B cell (primary cell): ENCODE measurements at regions of chr22 and their contacts with region 1.

Region 1: GRCh38 chr22:20298803-20299735 is 20.8 kb downstream of the DGCR6L start:
- DNase-seq: peak; percentile 89
- ATAC-seq: peak; percentile 90
- H3K4me3 ChIP-seq: peak overlapping the region in 4 of 5 experiments; percentile 28 to 75 (median 58)
- H3K4me3 Mint-ChIP-seq: peak overlapping the region; percentile 90
- H3K27ac ChIP-seq: no peak overlapping the region
- H3K27ac Mint-ChIP-seq: peak overlapping the region; percentile 70
- H3K4me1 ChIP-seq: peaks cover 4 to 10% of the 10 kb centered on the region in 2 donors
- H3K4me1 Mint-ChIP-seq: peaks cover 8% of the 10 kb centered on the region
- H3K27me3 ChIP-seq: peaks cover 0 to 7% (median 0%) of the 10 kb centered on the region in 4 experiments
- H3K27me3 Mint-ChIP-seq: peaks cover 8% of the 10 kb centered on the region
- CTCF ChIP-seq: no peak

Region 2: DNA sequence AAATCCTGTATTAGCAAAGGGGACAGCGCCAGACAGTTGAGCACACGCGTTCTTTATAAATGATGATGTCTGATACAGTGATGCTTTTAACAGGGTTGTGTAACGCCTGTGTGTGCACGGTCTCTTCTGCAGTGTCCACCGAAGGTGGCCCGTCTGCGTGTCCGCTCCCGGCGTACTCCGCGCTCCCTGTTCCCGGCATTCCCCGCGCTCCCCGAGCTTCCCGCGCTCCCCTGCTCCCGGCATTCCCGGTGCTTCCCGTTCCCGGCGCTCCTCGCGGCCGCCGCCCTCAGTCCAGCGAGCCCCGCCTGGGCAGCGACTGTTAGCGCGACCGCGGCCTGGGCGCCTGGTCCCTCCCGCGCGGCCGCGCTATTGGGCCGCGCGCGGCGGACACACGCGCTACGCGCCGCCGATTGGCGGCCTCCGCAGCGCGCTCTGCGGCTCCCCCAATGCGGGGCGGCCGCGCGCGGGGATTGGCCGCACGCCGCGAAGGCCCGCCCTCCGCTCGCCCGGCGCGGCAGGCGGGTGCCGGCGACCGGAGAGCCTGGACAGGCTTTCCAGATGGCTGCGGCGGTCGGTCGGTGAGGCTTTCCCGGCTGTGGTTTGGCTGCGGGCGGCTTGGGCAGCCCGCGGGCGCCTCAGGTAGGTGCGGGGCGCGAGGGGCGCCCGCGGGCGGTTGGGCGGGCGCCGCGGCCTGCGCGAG is 219.2 kb before region 1 on chr22 and contains the start of gene DGCR8:
- CTCF ChIA-PET with region 1: no interaction called
- POLR2A ChIA-PET with region 1: no interaction called
- intact Hi-C with region 1: loop called (anchors 2 kb)
- DNase-seq: peak; percentile 89
- ATAC-seq: peak; percentile 95
- H3K4me3 ChIP-seq: peak within 1 kb of the TSS; percentile 71 to 95 (median 86)
- H3K4me3 Mint-ChIP-seq: peak within 1 kb of the TSS; percentile 95
- H3K27ac ChIP-seq: peak within 1 kb of the TSS; percentile 29 to 70
- H3K27ac Mint-ChIP-seq: peak within 1 kb of the TSS; percentile 89
- H3K4me1 ChIP-seq: peaks cover 9 to 21% of the 10 kb centered on the region in 2 donors
- H3K4me1 Mint-ChIP-seq: peaks cover 37% of the 10 kb centered on the region
- H3K27me3 ChIP-seq: no peaks in the 10 kb centered on the region
- H3K27me3 Mint-ChIP-seq: no peaks in the 10 kb centered on the region
- CTCF ChIP-seq: no peak
- total RNA-seq, gene DGCR8: 43.2 and 46.6 TPM in 2 replicates

Region 3: GRCh38 chr22:20141186-20142077 is 157.6 kb before region 1 on chr22:
- CTCF ChIA-PET with region 1: no interaction called
- POLR2A ChIA-PET with region 1: no interaction called
- intact Hi-C with region 1: no loop called
- DNase-seq: no peak
- ATAC-seq: no peak
- H3K4me3 ChIP-seq: no peak overlapping the region
- H3K4me3 Mint-ChIP-seq: no peak overlapping the region
- H3K27ac ChIP-seq: no peak overlapping the region
- H3K27ac Mint-ChIP-seq: no peak overlapping the region
- H3K4me1 ChIP-seq: peaks cover 0 to 9% of the 10 kb centered on the region in 2 donors
- H3K4me1 Mint-ChIP-seq: peaks cover 15% of the 10 kb centered on the region
- H3K27me3 ChIP-seq: no peaks in the 10 kb centered on the region
- H3K27me3 Mint-ChIP-seq: no peaks in the 10 kb centered on the region
- CTCF ChIP-seq: no peak

Region 4: DNA sequence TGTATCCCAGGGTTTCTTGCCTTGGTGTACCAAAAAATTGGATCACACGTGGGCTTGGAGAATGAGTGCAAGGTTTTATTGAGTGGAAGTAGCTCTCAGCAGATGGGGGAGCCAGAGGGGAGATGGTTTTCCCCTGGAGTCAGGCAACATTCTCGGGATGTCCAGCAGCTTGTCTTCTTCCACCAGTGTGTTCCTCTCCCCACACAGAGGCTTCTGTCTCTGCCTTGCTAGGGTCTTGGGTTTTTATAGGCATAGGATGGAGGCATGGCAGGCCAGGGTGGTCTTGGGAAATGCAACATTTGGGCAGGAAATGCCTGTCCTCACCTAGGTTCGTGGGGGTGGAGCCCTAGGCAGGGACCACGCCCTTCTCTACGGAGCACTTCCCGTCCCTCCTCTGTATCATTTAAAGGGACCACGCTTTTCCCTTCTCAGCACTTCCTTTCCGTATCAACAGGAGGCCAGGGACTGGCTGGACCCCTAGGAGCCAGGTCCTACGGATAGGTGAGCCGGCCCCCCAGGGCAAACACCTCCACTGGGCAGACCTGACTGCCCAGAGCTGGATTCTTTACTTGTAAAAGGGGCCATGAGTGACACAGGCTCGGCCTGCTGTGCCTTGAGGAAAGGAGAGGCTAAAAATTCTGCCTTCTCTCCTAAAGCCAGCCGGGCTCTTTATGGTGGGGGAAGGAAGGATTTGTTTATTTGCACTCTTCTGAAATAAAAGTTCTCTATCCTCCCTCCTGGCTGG is 92.9 kb before region 1 on chr22:
- CTCF ChIA-PET with region 1: no interaction called
- POLR2A ChIA-PET with region 1: no interaction called
- intact Hi-C with region 1: loop called (anchors 1 kb)
- DNase-seq: peak; percentile 70
- ATAC-seq: peak; percentile 82
- H3K4me3 ChIP-seq: peak overlapping the region; percentile 49 to 87 (median 72)
- H3K4me3 Mint-ChIP-seq: peak overlapping the region; percentile 91
- H3K27ac ChIP-seq: peak overlapping the region; percentile 72 to 86
- H3K27ac Mint-ChIP-seq: peak overlapping the region; percentile 92
- H3K4me1 ChIP-seq: peaks cover 18 to 24% of the 10 kb centered on the region in 2 donors
- H3K4me1 Mint-ChIP-seq: peaks cover 20% of the 10 kb centered on the region
- H3K27me3 ChIP-seq: no peaks in the 10 kb centered on the region
- H3K27me3 Mint-ChIP-seq: peaks cover 3% of the 10 kb centered on the region
- CTCF ChIP-seq: no peak

Region 5: GRCh38 chr22:20319745-20320658 is 20.9 kb after region 1 on chr22 and contains the start of gene DGCR6L:
- CTCF ChIA-PET with region 1: no interaction called
- POLR2A ChIA-PET with region 1: interaction called, 4 read pairs
- intact Hi-C with region 1: loop called (anchors 1 kb)
- DNase-seq: peak; percentile 97
- ATAC-seq: peak; percentile 91
- H3K4me3 ChIP-seq: peak within 1 kb of the TSS; percentile 42 to 90 (median 90)
- H3K4me3 Mint-ChIP-seq: peak within 1 kb of the TSS; percentile 93
- H3K27ac ChIP-seq: peak within 1 kb of the TSS in 1 of 2 donors; percentile 74
- H3K27ac Mint-ChIP-seq: peak within 1 kb of the TSS; percentile 87
- H3K4me1 ChIP-seq: peaks cover 6 to 20% of the 10 kb centered on the region in 2 donors
- H3K4me1 Mint-ChIP-seq: peaks cover 27% of the 10 kb centered on the region
- H3K27me3 ChIP-seq: no peaks in the 10 kb centered on the region
- H3K27me3 Mint-ChIP-seq: no peaks in the 10 kb centered on the region
- CTCF ChIP-seq: no peak
- total RNA-seq, gene DGCR6L: 20.5 and 21.2 TPM in 2 replicates